Caco-2 (cell line): ENCODE measurements at regions of chrX and their contacts with region 1.

Region 1: GRCh38 chrX:106726485-106727437 is at the start of gene RNF128:
- DNase-seq: peak; percentile 80 to 84
- H3K4me3 ChIP-seq: peak within 1 kb of the TSS; percentile 88
- H3K4me3 Mint-ChIP-seq: peak within 1 kb of the TSS; percentile 88
- H3K27ac Mint-ChIP-seq: peak within 1 kb of the TSS; percentile 71
- H3K4me1 ChIP-seq: peaks cover 30% of the 10 kb centered on the region
- H3K4me1 Mint-ChIP-seq: peaks cover 6% of the 10 kb centered on the region
- H3K27me3 ChIP-seq: no peaks in the 10 kb centered on the region
- H3K27me3 Mint-ChIP-seq: no peaks in the 10 kb centered on the region
- CTCF ChIP-seq: no peak
- total RNA-seq, gene RNF128: 42.0 and 42.4 TPM in 2 replicates

Region 2: GRCh38 chrX:106716004-106716403 is 10.8 kb before region 1 on chrX:
- CTCF ChIA-PET with region 1: no interaction called
- POLR2A ChIA-PET with region 1: no interaction called
- intact Hi-C with region 1: loop called (anchors 1 kb)
- DNase-seq: peak; percentile 43 to 45
- H3K4me3 ChIP-seq: no peak overlapping the region
- H3K4me3 Mint-ChIP-seq: peak overlapping the region; percentile 60
- H3K27ac Mint-ChIP-seq: peak overlapping the region; percentile 90
- H3K4me1 ChIP-seq: peaks cover 37% of the 10 kb centered on the region
- H3K4me1 Mint-ChIP-seq: peaks cover 20% of the 10 kb centered on the region
- H3K27me3 ChIP-seq: no peaks in the 10 kb centered on the region
- H3K27me3 Mint-ChIP-seq: no peaks in the 10 kb centered on the region
- CTCF ChIP-seq: no peak

Region 3: DNA sequence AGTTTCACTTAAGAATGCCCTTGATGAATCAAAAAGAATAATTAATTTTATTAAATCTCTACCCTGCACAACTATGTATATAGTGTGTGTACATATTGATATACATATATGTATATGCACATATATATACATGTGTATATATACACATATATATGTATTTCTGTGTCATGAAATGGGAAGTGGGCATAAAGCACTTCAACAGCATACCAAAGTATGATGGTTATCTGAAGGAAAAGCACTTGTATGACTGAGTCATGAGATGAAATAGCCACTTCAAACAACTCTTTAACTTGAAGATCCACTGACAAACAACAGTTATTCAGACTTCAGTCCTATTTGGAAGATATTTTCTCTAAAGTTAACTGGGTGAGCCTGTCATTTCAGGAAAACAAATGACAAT is 16.0 kb after region 1 on chrX:
- CTCF ChIA-PET with region 1: no interaction called
- POLR2A ChIA-PET with region 1: no interaction called
- intact Hi-C with region 1: loop called (anchors 2 kb)
- DNase-seq: no peak
- H3K4me3 ChIP-seq: no peak overlapping the region
- H3K4me3 Mint-ChIP-seq: no peak overlapping the region
- H3K27ac Mint-ChIP-seq: no peak overlapping the region
- H3K4me1 ChIP-seq: peaks cover 19% of the 10 kb centered on the region
- H3K4me1 Mint-ChIP-seq: no peaks in the 10 kb centered on the region
- H3K27me3 ChIP-seq: no peaks in the 10 kb centered on the region
- H3K27me3 Mint-ChIP-seq: no peaks in the 10 kb centered on the region
- CTCF ChIP-seq: no peak

Region 4: GRCh38 chrX:106780664-106781377 is 54.1 kb after region 1 on chrX:
- CTCF ChIA-PET with region 1: no interaction called
- POLR2A ChIA-PET with region 1: interaction called, 5 read pairs
- intact Hi-C with region 1: loop called (anchors 5 kb)
- DNase-seq: peak; percentile 35
- H3K4me3 ChIP-seq: no peak overlapping the region
- H3K4me3 Mint-ChIP-seq: peak overlapping the region; percentile 27
- H3K27ac Mint-ChIP-seq: no peak overlapping the region
- H3K4me1 ChIP-seq: peaks cover 25% of the 10 kb centered on the region
- H3K4me1 Mint-ChIP-seq: peaks cover 12% of the 10 kb centered on the region
- H3K27me3 ChIP-seq: no peaks in the 10 kb centered on the region
- H3K27me3 Mint-ChIP-seq: no peaks in the 10 kb centered on the region
- CTCF ChIP-seq: no peak

Region 5: DNA sequence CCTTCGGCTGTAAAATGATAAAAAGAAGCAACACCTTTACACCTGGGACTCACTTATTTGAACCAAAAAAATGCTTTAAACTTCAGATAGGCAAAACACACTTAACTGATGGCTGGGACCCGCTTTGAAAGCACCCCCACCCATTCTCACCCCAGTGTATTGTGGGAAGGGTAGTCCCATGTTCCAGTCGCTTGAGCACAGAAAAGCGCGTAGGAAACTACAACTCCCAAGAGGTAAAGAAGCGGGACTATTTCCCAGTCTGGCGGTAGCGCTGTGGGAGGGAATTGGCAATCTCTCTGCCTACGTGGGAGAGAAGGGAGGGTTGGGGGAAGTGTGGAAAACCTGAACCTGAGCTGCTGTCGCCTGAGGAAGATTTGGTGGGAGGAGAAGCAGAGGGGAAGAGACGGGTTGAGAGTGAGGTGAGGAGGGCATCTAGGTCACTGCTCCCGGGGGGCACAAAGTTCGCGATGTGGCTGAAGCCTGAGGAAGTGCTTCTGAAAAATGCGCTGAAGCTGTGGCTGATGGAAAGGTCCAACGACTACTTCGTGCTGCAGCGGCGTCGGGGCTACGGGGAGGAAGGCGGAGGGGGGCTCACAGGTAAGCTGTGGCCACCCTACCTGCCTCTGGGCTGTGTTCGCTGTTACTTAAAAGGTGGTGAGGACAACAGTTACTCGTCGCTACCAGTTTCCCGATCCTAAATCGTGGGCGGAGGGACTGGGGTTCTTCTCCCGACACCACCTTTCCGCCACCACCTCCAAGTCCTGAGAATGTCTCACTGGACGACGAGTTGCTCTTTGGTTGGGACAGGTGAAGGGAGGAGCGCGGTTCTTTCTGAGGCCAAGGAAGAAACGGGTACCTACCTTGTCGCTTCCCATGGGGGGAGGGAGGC is 75.9 kb after region 1 on chrX and contains the start of gene TBC1D8B:
- CTCF ChIA-PET with region 1: no interaction called
- POLR2A ChIA-PET with region 1: no interaction called
- intact Hi-C with region 1: loop called (anchors 5 kb)
- DNase-seq: peak; percentile 84 to 87
- H3K4me3 ChIP-seq: peak within 1 kb of the TSS; percentile 38
- H3K4me3 Mint-ChIP-seq: peak within 1 kb of the TSS; percentile 91
- H3K27ac Mint-ChIP-seq: peak within 1 kb of the TSS; percentile 86
- H3K4me1 ChIP-seq: no peaks in the 10 kb centered on the region
- H3K4me1 Mint-ChIP-seq: peaks cover 7% of the 10 kb centered on the region
- H3K27me3 ChIP-seq: no peaks in the 10 kb centered on the region
- H3K27me3 Mint-ChIP-seq: no peaks in the 10 kb centered on the region
- CTCF ChIP-seq: no peak
- total RNA-seq, gene TBC1D8B: 7.4 and 8.7 TPM in 2 replicates

Region 6: GRCh38 chrX:106952988-106953387 is 226.2 kb after region 1 on chrX:
- CTCF ChIA-PET with region 1: no interaction called
- POLR2A ChIA-PET with region 1: no interaction called
- intact Hi-C with region 1: no loop called
- DNase-seq: no peak
- H3K4me3 ChIP-seq: no peak overlapping the region
- H3K4me3 Mint-ChIP-seq: no peak overlapping the region
- H3K27ac Mint-ChIP-seq: no peak overlapping the region
- H3K4me1 ChIP-seq: peaks cover 37% of the 10 kb centered on the region
- H3K4me1 Mint-ChIP-seq: peaks cover 21% of the 10 kb centered on the region
- H3K27me3 ChIP-seq: no peaks in the 10 kb centered on the region
- H3K27me3 Mint-ChIP-seq: no peaks in the 10 kb centered on the region
- CTCF ChIP-seq: peak; percentile 19 to 40